ENCODE measurements at regions of chr1 and their contacts with region 1.

Region 1: DNA sequence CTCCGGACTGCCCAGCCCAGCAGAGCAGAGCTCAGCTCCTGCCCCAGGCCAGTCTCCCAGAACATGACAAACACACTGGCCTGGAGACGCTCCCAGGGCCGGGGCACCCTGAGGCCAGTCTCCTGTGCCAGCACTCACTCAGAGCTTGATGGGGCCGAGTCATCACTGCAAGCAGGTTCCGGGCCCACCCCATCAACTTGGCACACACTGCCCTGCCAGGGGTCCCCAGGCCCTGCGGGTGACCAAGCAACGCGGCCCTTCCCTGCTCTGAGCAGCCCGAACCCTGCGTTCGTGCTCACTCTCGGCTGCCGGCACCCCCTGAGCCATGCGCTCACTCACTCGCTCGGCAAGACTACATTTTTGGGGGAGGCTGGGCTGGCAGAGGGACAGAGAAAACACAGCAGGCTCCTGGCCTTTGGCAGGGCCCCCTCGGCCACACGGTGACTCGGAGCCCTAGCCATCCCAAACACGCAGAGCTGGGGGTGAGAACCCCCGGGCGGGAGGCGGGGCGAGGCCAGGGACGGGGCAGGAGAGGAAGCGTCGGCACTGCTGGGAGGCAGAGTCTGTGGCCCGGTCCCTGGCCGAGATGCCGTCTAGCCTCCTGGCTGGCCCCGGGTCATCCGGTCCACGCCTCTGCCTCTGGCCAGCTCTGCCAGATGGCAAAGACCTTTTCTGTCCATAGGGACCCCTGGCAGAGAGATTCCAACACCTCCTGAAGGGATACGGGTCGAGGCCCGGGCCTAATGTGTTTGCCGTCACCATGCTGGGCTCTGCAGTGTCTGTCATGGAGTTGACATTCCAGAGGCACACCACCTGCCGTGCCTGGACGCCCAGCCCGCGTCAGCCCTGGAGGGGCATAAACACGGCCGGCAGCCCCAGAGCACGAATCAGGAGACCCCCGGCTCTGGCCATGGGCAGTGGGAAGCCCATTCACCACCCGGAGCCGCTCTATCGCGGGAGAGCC is 68.0 kb downstream of the MEGF6 start:
- DNase-seq: peak; percentile 61
- H3K4me3 ChIP-seq: no peak overlapping the region
- H3K27ac ChIP-seq: peak overlapping the region; percentile 50 to 75; a peak in 3 of 4 replicates
- H3K4me1 ChIP-seq: peaks cover 0 to 73% of the 10 kb centered on the region in 2 experiments; a peak in 1 of 4 replicates
- H3K27me3 ChIP-seq: no peaks in the 10 kb centered on the region
- CTCF ChIP-seq: no peak
- EP300 ChIP-seq: no peak
- RAD21 ChIP-seq: no peak

Region 2: DNA sequence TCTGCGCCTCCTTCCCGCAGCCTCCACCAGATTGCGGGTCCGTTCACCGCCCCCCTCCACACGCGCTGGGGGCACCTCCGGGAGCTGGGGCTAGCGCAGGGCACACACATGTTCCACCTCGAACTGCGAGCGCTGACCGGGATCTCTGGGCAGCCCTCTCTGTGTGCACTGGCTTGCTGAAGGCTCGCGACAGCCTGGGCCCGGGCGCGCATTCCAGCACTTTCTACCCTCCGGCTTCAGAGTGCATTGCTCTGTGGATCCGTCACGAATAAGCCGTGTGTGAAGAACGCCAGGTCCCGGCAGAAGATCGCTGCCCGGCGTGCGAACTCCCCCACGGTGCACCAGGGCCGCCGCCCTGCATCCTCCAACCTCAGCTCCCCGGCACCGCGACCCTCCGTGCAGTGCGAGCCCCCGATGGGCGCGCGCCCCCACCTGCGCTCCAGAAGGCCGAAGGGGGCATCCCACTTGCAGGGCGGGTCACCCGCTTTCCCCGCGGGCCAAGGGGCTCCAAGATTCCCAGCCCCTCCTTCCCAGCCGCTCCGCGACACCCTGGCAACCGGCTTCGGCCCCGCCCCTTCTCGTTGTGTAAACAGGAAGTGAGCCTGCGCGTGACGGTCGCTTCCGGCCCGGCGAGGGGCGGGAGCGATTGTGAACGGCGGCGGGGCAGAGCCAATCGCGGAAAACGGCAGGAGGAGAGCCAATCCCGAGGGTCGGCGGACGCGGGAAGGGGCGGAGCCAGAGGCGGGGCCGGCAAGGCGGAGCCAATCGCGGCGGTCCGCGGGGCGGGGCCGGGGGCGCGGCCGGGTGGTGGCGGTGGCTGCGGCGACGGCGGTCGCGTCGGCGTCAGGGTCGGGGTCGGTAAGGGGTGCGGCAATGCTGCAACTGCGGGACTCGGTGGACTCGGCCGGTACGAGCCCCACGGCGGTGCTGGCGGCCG is 81.1 kb after region 1 on chr1 and contains the start of gene TPRG1L:
- CTCF ChIA-PET with region 1: interaction called, 78 read pairs
- POLR2A ChIA-PET with region 1: no interaction called
- DNase-seq: peak; percentile 99
- H3K4me3 ChIP-seq: peak within 1 kb of the TSS; percentile 84 to 93
- H3K27ac ChIP-seq: peak within 1 kb of the TSS; percentile 20 to 77; a peak in 3 of 4 replicates
- H3K4me1 ChIP-seq: peaks cover 0 to 40% of the 10 kb centered on the region in 2 experiments; a peak in 2 of 4 replicates
- H3K27me3 ChIP-seq: no peaks in the 10 kb centered on the region
- CTCF ChIP-seq: no peak
- EP300 ChIP-seq: no peak
- RAD21 ChIP-seq: no peak
- polyA plus RNA-seq, gene TPRG1L: 25.9 and 35.5 TPM in 2 replicates

Measured in SK-N-SH (cell line).